GM10248 (cell line): ENCODE measurements at regions of chr2 and their contacts with region 1.

Region 1: GRCh38 chr2:101230541-101230993 is 22.1 kb upstream of the CNOT11 start:
- DNase-seq: no peak
- CTCF ChIP-seq: no peak

Region 2: GRCh38 chr2:101219246-101219645 is 11.3 kb before region 1 on chr2:
- CTCF ChIA-PET with region 1: interaction called, 10 read pairs
- POLR2A ChIA-PET with region 1: no interaction called
- DNase-seq: no peak
- CTCF ChIP-seq: no peak

Region 3: DNA sequence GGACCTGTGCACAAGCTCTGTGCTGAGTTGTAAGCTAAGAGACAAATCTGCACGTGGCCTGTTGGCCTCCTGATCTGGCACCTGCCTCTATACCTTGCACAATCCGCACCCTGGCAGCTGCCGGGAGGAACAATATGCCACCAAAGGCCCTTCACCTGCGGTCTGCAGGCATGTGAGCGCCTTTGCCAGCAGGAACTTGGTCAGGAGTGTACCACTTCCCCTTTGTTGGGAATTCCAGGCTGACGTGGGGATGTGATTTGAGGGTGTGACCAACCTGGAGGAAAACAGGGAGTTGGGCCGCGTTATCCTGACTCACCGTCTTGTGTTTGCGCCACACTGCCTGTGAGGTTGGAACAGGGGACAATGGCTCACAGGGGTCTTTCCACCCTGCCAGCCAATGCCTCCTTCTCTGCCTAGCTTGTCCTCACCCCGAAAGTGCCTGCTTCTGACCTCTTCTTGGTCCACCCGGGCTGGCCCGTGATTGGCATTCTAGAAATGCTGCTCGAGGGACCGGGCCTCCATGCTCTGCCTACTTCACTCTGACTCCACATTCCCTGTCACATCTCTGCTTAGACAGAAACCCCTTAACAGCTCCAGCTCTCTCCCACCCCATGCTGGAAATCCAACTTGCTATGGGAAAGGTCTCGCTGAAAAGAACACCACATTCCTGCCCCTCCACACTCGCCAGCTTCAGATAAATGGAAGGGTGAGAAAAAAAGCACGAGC is 399.8 kb after region 1 on chr2:
- CTCF ChIA-PET with region 1: no interaction called
- POLR2A ChIA-PET with region 1: no interaction called
- DNase-seq: no peak
- CTCF ChIP-seq: no peak

Region 4: DNA sequence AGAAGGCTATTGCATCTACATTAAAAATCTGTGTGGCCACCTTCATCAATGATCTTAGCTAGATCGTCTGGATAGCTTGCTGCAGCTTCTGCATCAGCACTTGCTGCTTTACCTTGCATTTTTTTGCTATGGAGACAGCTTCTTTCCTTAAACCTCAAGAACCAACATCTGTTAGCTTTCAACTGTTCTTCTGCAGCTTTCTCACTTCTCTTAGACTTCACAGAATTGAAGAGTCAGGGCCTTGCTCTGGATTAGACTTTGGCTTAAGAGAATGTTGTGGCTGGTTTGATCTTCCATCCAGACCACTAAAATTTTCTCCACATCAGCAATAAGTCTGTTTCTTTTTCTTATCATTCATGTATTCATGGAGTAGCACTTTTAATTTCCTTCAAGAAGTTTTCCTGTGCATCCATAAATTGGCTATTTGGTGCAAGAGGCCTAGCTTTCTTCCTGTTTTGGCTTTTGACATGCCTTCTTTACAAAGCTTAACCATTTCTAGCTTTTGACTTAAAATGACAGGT is 412.5 kb after region 1 on chr2:
- CTCF ChIA-PET with region 1: no interaction called
- POLR2A ChIA-PET with region 1: no interaction called
- DNase-seq: no peak
- CTCF ChIP-seq: no peak